ENCODE measurements at regions of chr1 and their contacts with region 1.

Region 1: GRCh38 chr1:87872692-87873091 is 544.0 kb downstream of the LMO4 start:
- DNase-seq: no peak
- H3K4me3 ChIP-seq: no peak overlapping the region
- H3K27ac ChIP-seq: no peak overlapping the region
- H3K4me1 ChIP-seq: peaks cover 18% of the 10 kb centered on the region
- H3K27me3 ChIP-seq: no peaks in the 10 kb centered on the region
- CTCF ChIP-seq: no peak

Region 2: GRCh38 chr1:87279966-87280535 is 592.6 kb before region 1 on chr1:
- CTCF ChIA-PET with region 1: interaction called, 11 read pairs
- POLR2A ChIA-PET with region 1: no interaction called
- intact Hi-C with region 1: no loop called
- DNase-seq: peak; percentile 52
- H3K4me3 ChIP-seq: no peak overlapping the region
- H3K27ac ChIP-seq: no peak overlapping the region
- H3K4me1 ChIP-seq: peaks cover 9% of the 10 kb centered on the region
- H3K27me3 ChIP-seq: no peaks in the 10 kb centered on the region
- CTCF ChIP-seq: peak; percentile 48

Region 3: DNA sequence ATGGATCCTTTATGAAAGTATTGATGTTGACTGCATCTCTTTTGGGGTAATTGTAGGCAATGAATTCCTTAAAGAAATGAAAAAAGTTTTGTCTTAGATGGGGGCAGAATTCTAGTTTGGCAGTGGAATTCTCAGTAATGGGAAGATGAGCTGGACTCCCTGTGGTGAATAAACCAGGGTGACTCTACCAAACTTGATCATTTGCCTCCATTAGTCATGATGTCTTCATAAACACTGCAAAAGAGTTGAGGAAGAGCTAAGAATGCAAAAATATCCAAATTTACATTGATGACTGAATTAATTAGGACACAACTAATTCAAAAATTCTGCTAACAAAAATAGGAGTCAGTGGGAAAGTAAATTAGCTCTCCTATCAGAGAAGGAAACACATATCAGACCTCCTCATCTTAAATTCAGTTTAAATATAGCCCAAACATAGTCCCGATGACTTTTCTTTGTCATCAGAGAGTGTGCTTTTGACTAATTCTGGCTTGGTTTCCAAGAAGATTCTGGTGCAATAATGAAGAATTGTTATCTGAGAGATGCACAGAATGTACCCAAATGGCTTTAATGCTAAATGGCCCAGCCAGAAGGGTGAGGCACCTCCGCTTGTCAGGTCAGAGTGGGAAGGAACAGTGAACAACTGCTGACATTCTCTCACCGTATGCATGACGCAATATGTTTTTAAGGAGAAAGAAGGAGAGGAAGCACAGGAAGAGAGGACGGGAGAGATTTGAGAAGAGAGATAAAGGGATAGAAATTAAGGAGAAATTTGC is 18.9 kb before region 1 on chr1:
- CTCF ChIA-PET with region 1: no interaction called
- POLR2A ChIA-PET with region 1: no interaction called
- intact Hi-C with region 1: no loop called
- DNase-seq: no peak
- H3K4me3 ChIP-seq: no peak overlapping the region
- H3K27ac ChIP-seq: no peak overlapping the region
- H3K4me1 ChIP-seq: no peaks in the 10 kb centered on the region
- H3K27me3 ChIP-seq: no peaks in the 10 kb centered on the region
- CTCF ChIP-seq: no peak

Region 4: GRCh38 chr1:87888446-87888845 is 15.8 kb after region 1 on chr1:
- CTCF ChIA-PET with region 1: no interaction called
- POLR2A ChIA-PET with region 1: no interaction called
- intact Hi-C with region 1: no loop called
- DNase-seq: peak; percentile 17
- H3K4me3 ChIP-seq: no peak overlapping the region
- H3K27ac ChIP-seq: no peak overlapping the region
- H3K4me1 ChIP-seq: no peaks in the 10 kb centered on the region
- H3K27me3 ChIP-seq: no peaks in the 10 kb centered on the region
- CTCF ChIP-seq: no peak

Region 5: GRCh38 chr1:87968197-87968955 is 95.7 kb after region 1 on chr1:
- CTCF ChIA-PET with region 1: no interaction called
- POLR2A ChIA-PET with region 1: no interaction called
- intact Hi-C with region 1: no loop called
- DNase-seq: no peak
- H3K4me3 ChIP-seq: no peak overlapping the region
- H3K27ac ChIP-seq: no peak overlapping the region
- H3K4me1 ChIP-seq: no peaks in the 10 kb centered on the region
- H3K27me3 ChIP-seq: no peaks in the 10 kb centered on the region
- CTCF ChIP-seq: no peak

Measured in A673 (cell line).